ENCODE measurements at regions of chr2 and their contacts with region 1.

Region 1: GRCh38 chr2:112138159-112138773 is at the start of gene FBLN7:
- DNase-seq: peak; percentile 22
- H3K4me3 Mint-ChIP-seq: peak within 1 kb of the TSS; percentile 62
- H3K27ac Mint-ChIP-seq: peak within 1 kb of the TSS; percentile 55
- H3K4me1 Mint-ChIP-seq: peaks cover 7% of the 10 kb centered on the region
- H3K27me3 Mint-ChIP-seq: peaks cover 23% of the 10 kb centered on the region
- total RNA-seq, gene FBLN7: 34.5 to 39.0 TPM

Region 2: GRCh38 chr2:111986116-111986900 is 152.0 kb before region 1 on chr2:
- CTCF ChIA-PET with region 1: no interaction called
- intact Hi-C with region 1: no loop called
- DNase-seq: no peak
- H3K4me3 Mint-ChIP-seq: no peak overlapping the region
- H3K27ac Mint-ChIP-seq: no peak overlapping the region
- H3K4me1 Mint-ChIP-seq: peaks cover 13% of the 10 kb centered on the region
- H3K27me3 Mint-ChIP-seq: no peaks in the 10 kb centered on the region

Region 3: DNA sequence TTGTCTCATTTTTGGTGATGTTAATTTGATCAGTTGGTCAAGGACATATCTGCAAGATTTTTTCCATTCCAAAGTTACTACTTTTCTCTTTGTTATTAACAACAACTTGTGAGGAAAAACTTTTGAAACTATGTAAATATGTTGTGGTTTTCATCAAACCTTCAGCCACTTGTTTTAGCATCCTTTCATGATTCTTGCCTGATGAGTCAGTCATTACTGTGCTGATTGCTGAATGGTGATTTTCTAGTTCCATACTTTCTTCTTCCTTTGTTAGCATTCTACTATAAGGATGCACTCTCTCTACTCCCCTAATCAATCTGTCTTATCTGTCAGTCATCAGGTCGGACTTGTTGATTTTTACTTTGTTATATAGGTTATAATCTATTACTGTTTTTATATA is 72.3 kb before region 1 on chr2:
- CTCF ChIA-PET with region 1: no interaction called
- intact Hi-C with region 1: no loop called
- DNase-seq: no peak
- H3K4me3 Mint-ChIP-seq: no peak overlapping the region
- H3K27ac Mint-ChIP-seq: no peak overlapping the region
- H3K4me1 Mint-ChIP-seq: peaks cover 44% of the 10 kb centered on the region
- H3K27me3 Mint-ChIP-seq: no peaks in the 10 kb centered on the region

Region 4: DNA sequence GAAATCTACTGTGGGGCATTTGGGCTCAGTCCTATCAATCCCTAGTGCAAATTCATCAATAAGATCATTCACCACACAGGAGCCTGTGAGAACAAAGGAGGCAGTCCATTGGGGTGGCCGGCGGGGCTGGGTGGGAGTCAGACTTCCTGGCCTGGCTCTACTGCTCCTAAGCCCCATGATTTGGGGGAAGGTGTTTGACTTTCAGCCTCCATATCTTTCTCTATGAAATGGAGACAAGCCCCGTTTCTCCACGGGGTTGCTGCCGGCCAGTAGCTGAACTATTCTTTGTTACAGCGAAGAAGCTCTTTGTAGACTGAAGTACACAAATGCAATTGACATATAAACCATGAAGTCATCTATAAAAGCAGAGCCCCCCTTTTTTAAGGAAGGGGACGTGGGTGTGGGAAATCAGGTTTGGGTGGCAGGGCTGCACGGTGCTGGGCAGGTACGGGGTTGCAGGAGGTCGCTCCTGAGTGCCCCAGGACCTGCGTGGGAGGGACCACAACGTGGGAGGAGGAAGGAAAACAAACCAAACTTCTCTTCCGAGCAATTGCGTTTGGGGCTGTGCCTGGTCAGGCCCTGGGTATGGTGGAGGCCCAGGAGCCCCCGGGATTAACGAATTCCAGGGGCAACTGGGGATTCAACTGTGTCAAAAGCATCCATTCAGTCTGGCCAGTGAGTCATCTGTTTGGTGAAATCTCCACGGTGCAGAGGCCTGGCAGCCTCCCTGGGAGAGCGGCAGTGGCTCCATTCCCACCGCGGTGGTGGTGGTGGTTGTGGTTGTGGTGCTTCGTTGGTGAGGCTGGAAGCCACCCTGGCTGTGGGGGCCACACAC is 18.1 kb after region 1 on chr2:
- CTCF ChIA-PET with region 1: no interaction called
- intact Hi-C with region 1: loop called (anchors 2 kb)
- DNase-seq: peak; percentile 64
- H3K4me3 Mint-ChIP-seq: peak overlapping the region; percentile 43
- H3K27ac Mint-ChIP-seq: peak overlapping the region; percentile 74
- H3K4me1 Mint-ChIP-seq: peaks cover 51% of the 10 kb centered on the region
- H3K27me3 Mint-ChIP-seq: no peaks in the 10 kb centered on the region